ENCODE measurements at regions of chr3 and their contacts with region 1.

Region 1: DNA sequence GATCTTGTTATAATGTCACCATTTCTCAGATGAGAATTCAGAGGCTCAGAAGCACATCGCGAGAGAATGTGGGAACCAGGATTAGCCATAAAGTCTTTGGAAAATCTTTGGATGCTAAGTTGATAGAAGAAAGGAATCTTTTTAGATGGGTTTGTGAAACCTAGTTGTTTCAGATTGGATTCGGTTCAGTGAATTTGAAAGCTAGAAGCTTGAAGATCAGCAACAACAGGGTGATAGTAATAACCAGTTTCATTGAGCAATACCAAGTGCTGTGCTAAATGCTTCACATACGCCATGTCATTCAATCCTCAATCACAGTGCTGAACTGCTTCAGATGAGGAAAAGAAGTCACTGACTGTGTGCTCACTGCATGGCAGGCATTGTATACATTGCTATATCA is 47.4 kb upstream of the MITF start:
- DNase-seq: no peak
- ATAC-seq: no peak
- H3K4me3 ChIP-seq: no peak overlapping the region
- H3K27ac ChIP-seq: no peak overlapping the region
- H3K4me1 ChIP-seq: peaks cover 11% of the 10 kb centered on the region
- H3K27me3 ChIP-seq: no peaks in the 10 kb centered on the region
- CTCF ChIP-seq: no peak

Region 2: DNA sequence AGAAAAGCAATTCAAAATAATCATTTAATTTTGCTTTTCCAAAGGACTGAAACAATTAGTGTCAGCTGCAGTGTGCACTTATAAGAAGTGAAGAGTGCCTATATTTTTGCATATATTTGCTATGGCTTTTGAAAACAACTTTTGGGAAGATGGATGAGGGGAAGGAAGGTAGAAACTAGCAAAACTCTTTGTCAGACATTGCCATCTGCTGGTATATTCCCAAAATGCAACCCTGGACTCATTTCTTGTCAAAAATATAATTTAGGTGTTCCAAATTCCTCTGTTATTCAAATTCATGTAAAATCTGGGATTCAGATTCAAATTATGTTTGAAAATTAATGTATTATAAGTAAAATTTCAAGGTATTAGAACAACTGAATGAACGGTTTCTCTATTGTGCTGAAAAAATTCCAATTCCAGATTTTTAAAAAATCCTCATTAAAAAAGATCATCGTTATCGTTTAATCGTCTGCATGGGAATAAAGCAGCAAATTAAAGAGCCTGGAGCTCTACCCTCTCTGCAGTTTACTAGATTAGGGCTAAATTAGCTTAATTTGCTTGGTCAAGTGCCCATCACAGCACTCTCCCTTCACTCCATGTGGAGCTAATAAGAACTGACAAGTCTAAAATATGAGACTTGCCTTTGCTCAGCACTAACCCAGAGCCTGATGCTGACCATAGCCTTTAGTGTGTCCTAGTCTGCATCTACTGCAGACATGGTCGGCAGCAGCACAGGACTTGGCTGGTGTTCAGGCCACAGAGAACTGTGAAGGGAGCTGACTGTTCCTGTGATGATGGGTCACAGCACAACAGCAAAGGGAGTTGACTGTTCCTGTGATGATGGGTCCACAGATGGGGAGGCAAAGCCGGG is 20.5 kb before region 1 on chr3:
- CTCF ChIA-PET with region 1: no interaction called
- POLR2A ChIA-PET with region 1: no interaction called
- intact Hi-C with region 1: no loop called
- DNase-seq: peak; percentile 64
- ATAC-seq: peak; percentile 33; the same call in 1 of the 2 replicates
- H3K4me3 ChIP-seq: no peak overlapping the region
- H3K27ac ChIP-seq: no peak overlapping the region
- H3K4me1 ChIP-seq: peaks cover 5% of the 10 kb centered on the region; the same call in 1 of the 2 replicates
- H3K27me3 ChIP-seq: no peaks in the 10 kb centered on the region
- CTCF ChIP-seq: peak; percentile 64

Region 3: DNA sequence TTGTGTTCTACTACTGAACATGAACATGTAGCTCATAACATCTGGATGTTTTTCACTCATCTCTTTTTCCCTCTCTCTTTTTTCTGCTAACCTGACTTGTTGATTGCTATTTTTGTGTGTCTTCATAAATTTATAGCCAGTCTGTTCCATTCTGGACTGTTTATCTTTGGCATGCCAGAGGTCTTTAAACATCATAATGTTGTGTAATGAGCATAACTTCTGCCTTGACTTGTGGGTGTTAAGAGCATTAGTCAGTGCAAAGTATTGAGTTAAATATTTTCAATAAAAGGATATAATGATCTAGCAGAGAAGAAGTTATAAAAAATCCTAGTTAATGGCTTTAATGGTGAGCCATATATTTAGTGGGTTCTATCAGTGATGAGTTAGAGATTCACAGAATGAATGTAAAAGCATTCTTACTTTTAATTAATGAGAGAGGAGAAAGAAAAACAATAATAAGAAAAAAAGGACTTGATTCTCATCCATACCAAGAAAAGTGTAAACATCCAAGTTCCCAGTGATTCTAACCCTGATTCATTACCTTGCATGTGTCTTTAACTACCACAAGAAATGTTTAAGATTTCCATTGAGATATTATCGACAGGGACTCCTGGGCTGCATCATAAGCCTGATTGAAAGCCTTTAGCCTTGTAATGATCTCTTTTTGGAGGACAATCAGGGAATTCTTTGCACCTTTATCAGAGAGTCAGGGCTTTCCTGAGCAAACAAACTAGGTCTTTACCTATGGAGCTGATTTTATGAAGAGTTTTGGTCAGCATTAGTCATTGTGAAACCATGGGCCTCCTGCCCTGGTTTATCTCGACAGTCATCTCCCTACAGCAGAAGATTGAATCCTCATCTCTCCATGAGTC is 70.3 kb after region 1 on chr3:
- CTCF ChIA-PET with region 1: no interaction called
- POLR2A ChIA-PET with region 1: no interaction called
- intact Hi-C with region 1: no loop called
- DNase-seq: peak; percentile 81
- ATAC-seq: peak; percentile 90
- H3K4me3 ChIP-seq: peak overlapping the region; percentile 33
- H3K27ac ChIP-seq: peak overlapping the region; percentile 85
- H3K4me1 ChIP-seq: peaks cover 52% of the 10 kb centered on the region
- H3K27me3 ChIP-seq: no peaks in the 10 kb centered on the region
- CTCF ChIP-seq: no peak

Region 4: DNA sequence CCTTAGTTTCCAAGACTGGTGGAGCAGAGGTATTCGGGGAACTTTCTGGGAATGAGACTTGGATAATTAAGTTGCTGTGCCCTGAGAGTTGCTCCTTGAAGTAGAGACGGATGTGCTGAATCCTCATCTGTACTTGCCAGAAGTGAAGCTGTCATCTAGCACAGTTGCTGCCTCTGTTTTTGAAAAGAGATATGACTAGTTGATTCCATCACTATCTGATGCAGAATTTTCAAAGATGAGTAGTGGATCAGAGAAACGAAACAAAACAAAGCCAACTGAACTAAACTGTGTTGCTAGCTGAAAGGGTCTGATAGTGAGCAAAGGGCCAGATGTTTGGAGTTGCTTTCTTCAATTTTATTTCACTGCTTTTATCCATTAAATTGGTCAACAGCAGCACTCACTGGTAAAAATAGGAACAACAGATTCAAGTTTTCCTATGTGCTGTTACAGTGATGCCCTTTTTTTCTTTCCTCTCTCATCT is 100.1 kb after region 1 on chr3:
- CTCF ChIA-PET with region 1: interaction called, 15 read pairs
- POLR2A ChIA-PET with region 1: no interaction called
- intact Hi-C with region 1: loop called (anchors 1 kb)
- DNase-seq: peak; percentile 39
- ATAC-seq: peak; percentile 64
- H3K4me3 ChIP-seq: no peak overlapping the region
- H3K27ac ChIP-seq: no peak overlapping the region
- H3K4me1 ChIP-seq: peaks cover 9% of the 10 kb centered on the region
- H3K27me3 ChIP-seq: no peaks in the 10 kb centered on the region
- CTCF ChIP-seq: peak; percentile 54

Measured in PC-3 (cell line).